Activated T-helper 2 cell treated with anti-CD3 and anti-CD28 coated beads, Interferon-gamma antibody, Interleukin-2, Interleukin-4, amounts not matched to agents 10 μg/mL and 5 μg/mL and 100 μg/mL, durations not matched to agents 14 hours and 24 hours and 36 hours (primary cell): ENCODE measurements at regions of chr4 and their contacts with region 1.

Region 1: GRCh38 chr4:10582059-10582686 is 102.4 kb downstream of the CLNK start:
- DNase-seq: no peak
- H3K4me3 Mint-ChIP-seq: no peak overlapping the region
- H3K27ac Mint-ChIP-seq: no peak overlapping the region
- H3K4me1 Mint-ChIP-seq: peaks cover 28% of the 10 kb centered on the region
- H3K27me3 Mint-ChIP-seq: peaks cover 3% of the 10 kb centered on the region

Region 2: GRCh38 chr4:10655986-10656385 is 73.8 kb after region 1 on chr4:
- intact Hi-C with region 1: loop called (anchors 5 kb)
- DNase-seq: no peak
- H3K4me3 Mint-ChIP-seq: peak overlapping the region; percentile 55
- H3K27ac Mint-ChIP-seq: peak overlapping the region; percentile 90
- H3K4me1 Mint-ChIP-seq: peaks cover 42% of the 10 kb centered on the region
- H3K27me3 Mint-ChIP-seq: no peaks in the 10 kb centered on the region

Region 3: GRCh38 chr4:10893395-10893794 is 311.2 kb after region 1 on chr4:
- intact Hi-C with region 1: loop called (anchors 10 kb)
- DNase-seq: no peak
- H3K4me3 Mint-ChIP-seq: no peak overlapping the region
- H3K27ac Mint-ChIP-seq: no peak overlapping the region
- H3K4me1 Mint-ChIP-seq: peaks cover 22% of the 10 kb centered on the region
- H3K27me3 Mint-ChIP-seq: peaks cover 4% of the 10 kb centered on the region

Region 4: DNA sequence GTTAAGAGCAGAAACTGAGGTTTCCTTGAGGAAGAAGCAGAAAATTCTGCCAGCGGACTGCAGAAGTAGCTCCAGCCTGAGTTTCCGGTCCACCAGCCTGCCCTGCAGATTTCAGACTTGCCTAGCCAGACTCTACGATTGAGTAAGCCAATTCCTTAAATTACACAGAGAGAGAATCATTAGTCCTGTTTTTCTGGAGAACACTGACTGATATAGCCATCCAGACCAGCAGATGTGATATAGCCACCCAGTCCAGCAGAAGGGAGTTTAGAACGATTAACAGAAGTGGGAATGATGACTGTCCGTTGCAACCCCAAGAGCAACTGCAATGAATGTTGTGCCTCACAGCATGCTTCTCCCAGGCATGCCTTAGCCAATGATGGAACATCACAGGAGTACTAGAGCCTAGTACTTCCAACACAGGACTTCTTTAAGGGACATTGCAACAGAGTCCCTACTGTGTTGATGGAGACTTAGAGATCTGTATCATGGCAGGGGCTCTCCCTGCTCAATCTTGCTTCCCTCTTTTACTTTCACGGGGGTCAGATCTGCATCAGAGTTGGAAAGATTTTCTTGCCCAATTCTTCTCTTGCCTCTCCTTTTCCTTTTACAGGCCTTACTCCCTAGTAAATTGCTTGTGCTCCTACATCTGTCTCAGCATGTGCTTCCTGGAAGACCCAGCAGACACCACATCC is 367.0 kb after region 1 on chr4:
- intact Hi-C with region 1: loop called (anchors 5 kb)
- DNase-seq: no peak
- H3K4me3 Mint-ChIP-seq: no peak overlapping the region
- H3K27ac Mint-ChIP-seq: no peak overlapping the region
- H3K4me1 Mint-ChIP-seq: peaks cover 3% of the 10 kb centered on the region
- H3K27me3 Mint-ChIP-seq: peaks cover 24% of the 10 kb centered on the region

Region 5: DNA sequence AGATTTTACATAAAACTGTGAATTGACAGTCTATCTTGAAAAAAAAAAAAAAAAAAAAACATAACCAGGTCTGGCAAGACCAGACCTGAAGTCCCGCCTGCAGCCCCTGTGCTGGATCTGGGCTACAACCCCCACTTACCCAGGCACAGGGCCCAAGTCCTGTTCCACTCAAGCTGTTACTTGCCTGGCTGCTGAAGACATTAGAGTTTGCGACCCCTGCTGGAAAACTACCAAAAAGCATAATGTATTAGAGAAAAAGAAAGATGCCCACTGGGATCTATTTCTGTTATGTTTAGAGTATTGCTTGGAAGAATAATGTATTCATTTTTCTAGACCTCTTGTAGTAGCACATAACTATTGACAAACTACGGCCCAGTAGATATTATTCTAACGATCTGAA is 841.8 kb after region 1 on chr4:
- intact Hi-C with region 1: loop called (anchors 1 kb)
- DNase-seq: no peak
- H3K4me3 Mint-ChIP-seq: no peak overlapping the region
- H3K27ac Mint-ChIP-seq: no peak overlapping the region
- H3K4me1 Mint-ChIP-seq: peaks cover 16% of the 10 kb centered on the region
- H3K27me3 Mint-ChIP-seq: peaks cover 43% of the 10 kb centered on the region

Region 6: GRCh38 chr4:11497212-11497806 is 915.1 kb after region 1 on chr4:
- intact Hi-C with region 1: loop called (anchors 10 kb)
- DNase-seq: no peak
- H3K4me3 Mint-ChIP-seq: no peak overlapping the region
- H3K27ac Mint-ChIP-seq: peak overlapping the region; percentile 67
- H3K4me1 Mint-ChIP-seq: peaks cover 24% of the 10 kb centered on the region
- H3K27me3 Mint-ChIP-seq: peaks cover 6% of the 10 kb centered on the region

Region 7: GRCh38 chr4:11720292-11720691 is 1138.1 kb after region 1 on chr4:
- intact Hi-C with region 1: loop called (anchors 5 kb)
- DNase-seq: no peak
- H3K4me3 Mint-ChIP-seq: no peak overlapping the region
- H3K27ac Mint-ChIP-seq: no peak overlapping the region
- H3K4me1 Mint-ChIP-seq: no peaks in the 10 kb centered on the region
- H3K27me3 Mint-ChIP-seq: no peaks in the 10 kb centered on the region